Prostate gland (tissue), 2 donors: ENCODE measurements at regions of chr2 and their contacts with region 1.

Region 1: DNA sequence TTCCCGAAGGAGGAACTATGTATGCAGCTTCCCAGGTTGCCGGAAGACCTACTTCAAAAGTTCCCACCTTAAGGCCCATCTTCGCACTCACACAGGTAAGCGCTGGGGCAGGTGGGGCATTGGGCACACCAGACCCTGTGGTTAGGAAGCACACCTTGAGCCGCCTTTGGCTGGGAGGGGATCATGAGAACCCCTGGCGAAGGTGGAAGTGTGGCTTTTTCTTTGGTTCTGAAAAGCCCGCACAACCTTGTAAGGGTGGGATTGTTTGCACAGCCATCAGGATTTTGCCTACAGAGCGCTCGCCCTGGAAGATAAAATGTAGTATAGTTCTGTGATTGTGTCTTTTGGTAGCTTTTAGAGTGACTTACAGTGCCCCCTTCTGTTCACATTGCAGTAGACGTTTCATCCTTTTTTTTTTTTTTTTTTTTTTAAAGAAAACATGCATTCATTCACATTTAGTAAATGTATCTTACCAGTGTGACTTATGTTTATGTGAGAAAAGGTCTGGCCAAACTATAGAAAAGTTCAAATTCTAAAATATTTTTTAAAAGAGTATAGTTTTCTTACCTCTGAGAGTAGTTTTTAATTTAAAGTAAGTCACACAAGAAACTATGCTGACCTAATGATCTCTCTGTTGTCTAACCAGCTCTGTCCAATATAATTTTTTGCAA is 5.3 kb downstream of the KLF11 start:
- DNase-seq: no peak
- H3K4me3 ChIP-seq: no peak overlapping the region
- H3K27ac ChIP-seq: no peak overlapping the region
- H3K4me1 ChIP-seq: no peaks in the 10 kb centered on the region
- H3K27me3 ChIP-seq: no peaks in the 10 kb centered on the region
- CTCF ChIP-seq: peak; percentile 31 to 64 (median 48)
- POLR2A ChIP-seq: no peak

Region 2: GRCh38 chr2:9630749-9631483 is 417.7 kb before region 1 on chr2 and contains the start of gene YWHAQ:
- intact Hi-C with region 1: loop called (anchors 5 kb)
- DNase-seq: peak; percentile 99
- H3K4me3 ChIP-seq: peak within 1 kb of the TSS; percentile 61 to 76
- H3K27ac ChIP-seq: peak within 1 kb of the TSS; percentile 86 to 94
- H3K4me1 ChIP-seq: peaks cover 6% of the 10 kb centered on the region
- H3K27me3 ChIP-seq: no peaks in the 10 kb centered on the region
- CTCF ChIP-seq: no peak
- POLR2A ChIP-seq: peak; percentile 96
- total RNA-seq, gene YWHAQ: 208 to 248 TPM

Region 3: DNA sequence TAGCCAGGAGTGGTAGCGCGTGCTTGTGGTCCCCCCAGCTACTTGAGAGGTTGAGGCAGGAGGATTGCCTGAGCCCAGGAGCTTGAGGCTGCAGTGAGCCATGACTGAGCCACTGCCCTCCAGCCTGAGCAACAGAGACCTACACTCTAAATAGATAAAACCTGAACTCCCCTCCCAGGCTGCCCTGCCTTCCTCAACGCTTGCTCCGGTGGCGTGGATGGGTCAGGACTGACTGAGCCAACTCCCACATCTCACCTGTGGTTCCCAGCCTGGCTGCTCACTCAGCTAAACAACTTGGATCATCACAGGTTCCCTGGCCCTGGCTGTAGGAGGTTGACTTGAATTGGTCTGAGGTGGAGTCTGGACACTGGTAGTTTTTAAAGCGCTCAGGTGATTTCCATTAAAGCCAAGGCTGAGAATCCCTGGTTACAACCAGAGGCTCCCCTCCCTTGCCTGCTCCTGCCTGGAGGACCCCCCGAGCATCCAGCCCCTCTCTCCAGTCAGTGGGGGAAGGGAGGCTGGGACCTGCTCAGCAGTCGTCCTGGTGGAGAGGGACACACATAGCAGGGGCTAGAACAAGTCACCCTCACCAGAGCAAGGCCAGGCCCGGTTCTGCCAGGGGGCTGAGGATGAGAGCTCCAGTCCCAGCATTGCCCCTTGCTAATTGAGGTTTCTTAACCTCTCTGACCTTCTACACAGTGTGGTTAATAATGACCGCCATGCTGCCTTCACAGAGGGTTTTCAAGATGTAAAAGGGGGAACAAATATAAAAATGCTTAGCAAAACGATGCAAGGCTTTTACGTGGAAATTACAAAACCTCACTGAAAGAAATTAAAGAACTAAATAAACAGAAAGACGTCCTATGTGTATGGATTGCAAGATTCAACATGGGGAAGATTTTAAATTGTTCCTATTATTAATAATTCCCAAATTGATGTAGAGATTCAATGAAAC is 252.3 kb before region 1 on chr2:
- intact Hi-C with region 1: no loop called
- DNase-seq: no peak
- H3K4me3 ChIP-seq: no peak overlapping the region
- H3K27ac ChIP-seq: no peak overlapping the region
- H3K4me1 ChIP-seq: peaks cover 4% of the 10 kb centered on the region
- H3K27me3 ChIP-seq: no peaks in the 10 kb centered on the region
- CTCF ChIP-seq: no peak
- POLR2A ChIP-seq: no peak

Region 4: GRCh38 chr2:9813312-9814133 is 235.1 kb before region 1 on chr2:
- intact Hi-C with region 1: loop called (anchors 2 kb)
- DNase-seq: peak; percentile 69
- H3K4me3 ChIP-seq: no peak overlapping the region
- H3K27ac ChIP-seq: no peak overlapping the region
- H3K4me1 ChIP-seq: peaks cover 4% of the 10 kb centered on the region
- H3K27me3 ChIP-seq: no peaks in the 10 kb centered on the region
- CTCF ChIP-seq: peak; percentile 62 to 95 (median 92)
- POLR2A ChIP-seq: no peak

Region 5: GRCh38 chr2:9984217-9984739 is 64.4 kb before region 1 on chr2:
- intact Hi-C with region 1: loop called (anchors 2 kb)
- DNase-seq: no peak
- H3K4me3 ChIP-seq: no peak overlapping the region
- H3K27ac ChIP-seq: peak overlapping the region; percentile 16 to 35
- H3K4me1 ChIP-seq: no peaks in the 10 kb centered on the region
- H3K27me3 ChIP-seq: no peaks in the 10 kb centered on the region
- CTCF ChIP-seq: peak; percentile 66 to 83 (median 72)
- POLR2A ChIP-seq: no peak

Region 6: DNA sequence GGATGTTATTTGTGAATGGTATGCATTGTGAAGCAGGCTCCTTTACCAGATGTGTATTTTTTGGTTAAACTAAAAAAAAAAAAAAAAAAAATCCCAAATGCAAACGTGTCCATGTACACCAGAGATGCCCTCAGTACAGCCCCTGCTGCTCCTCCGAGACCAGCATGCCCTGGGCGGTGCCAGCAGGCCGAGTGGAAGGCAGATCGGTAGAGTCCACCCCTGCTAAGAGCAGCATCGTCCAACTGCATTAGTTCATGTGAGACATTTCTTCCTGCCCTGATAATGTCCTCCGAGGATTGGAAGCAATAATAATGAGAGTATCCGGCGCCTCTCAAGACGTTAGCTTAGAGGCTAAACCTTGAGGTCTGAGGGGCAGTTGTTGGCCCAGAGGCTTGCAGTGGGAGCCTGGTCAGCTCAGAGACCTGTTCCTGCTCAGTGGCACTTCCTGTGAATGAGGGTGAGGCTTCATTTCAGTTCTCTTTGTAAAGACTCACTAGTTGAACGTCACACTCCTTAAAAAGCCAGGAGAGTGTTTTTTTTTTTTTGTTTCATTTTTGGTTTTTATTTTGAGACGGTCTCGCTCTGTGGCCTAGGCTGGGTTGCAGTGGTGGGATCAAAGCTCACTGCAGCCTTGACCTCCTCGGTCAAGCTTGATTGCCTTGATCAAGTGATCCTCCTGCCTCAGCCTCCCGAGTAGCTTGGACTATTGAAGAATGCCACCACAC is 1112.3 kb after region 1 on chr2:
- intact Hi-C with region 1: no loop called
- DNase-seq: no peak
- H3K4me3 ChIP-seq: no peak overlapping the region
- H3K27ac ChIP-seq: no peak overlapping the region
- H3K4me1 ChIP-seq: no peaks in the 10 kb centered on the region
- H3K27me3 ChIP-seq: no peaks in the 10 kb centered on the region
- CTCF ChIP-seq: no peak
- POLR2A ChIP-seq: no peak